ENCODE measurements at regions of chr12 and their contacts with region 1.

Region 1: DNA sequence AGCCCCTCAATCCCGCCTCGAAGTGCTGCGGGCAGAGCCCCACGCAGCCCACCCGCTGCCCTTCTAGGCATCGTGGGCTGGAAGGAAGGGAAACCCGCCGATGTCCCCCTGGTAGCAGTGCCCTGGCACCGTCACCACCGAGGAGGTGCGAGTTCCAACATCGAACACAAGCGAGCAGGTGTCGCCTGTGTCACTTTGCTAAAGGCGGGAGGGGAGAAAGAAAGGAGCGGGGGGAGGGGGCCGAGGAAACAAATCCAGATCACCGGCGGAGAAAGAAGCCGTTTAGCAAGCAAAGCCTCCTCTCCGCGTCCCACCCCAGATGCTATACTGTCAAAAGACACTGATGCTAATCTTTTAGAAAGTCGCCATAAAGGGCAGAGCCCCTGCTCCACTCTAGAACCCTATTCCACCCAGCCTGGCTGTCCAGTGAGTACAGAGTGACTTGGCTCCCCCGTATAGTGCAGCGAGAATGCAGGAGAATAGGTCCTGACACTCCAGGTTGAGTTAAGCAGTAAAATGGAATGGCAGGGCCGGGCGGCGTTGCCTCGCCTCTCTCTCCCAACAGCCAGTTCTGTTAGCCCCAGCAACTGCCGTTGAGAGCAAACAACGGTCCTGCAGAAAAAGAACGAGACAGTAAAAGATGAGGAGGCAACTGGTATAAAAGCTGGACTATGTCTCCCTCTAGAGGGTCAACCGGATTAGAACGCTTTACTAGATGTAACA is 67.9 kb upstream of the USP15 start:
- DNase-seq: peak in 11 of 14 experiments; percentile 18 to 82 (median 42)
- ATAC-seq: peak; percentile 93
- H3K4me3 ChIP-seq: peak overlapping the region; percentile 52
- H3K4me3 Mint-ChIP-seq: peak overlapping the region; percentile 82
- H3K27ac ChIP-seq: no peak overlapping the region
- H3K27ac Mint-ChIP-seq: no peak overlapping the region
- H3K4me1 ChIP-seq: peaks cover 22% of the 10 kb centered on the region
- H3K4me1 Mint-ChIP-seq: peaks cover 24% of the 10 kb centered on the region
- H3K27me3 ChIP-seq: peaks cover 21 to 42% of the 10 kb centered on the region in 2 experiments
- H3K27me3 Mint-ChIP-seq: peaks cover 51% of the 10 kb centered on the region
- CTCF ChIP-seq: peak; percentile 68

Region 2: GRCh38 chr12:62006076-62006732 is 186.1 kb before region 1 on chr12:
- CTCF ChIA-PET with region 1: no interaction called
- POLR2A ChIA-PET with region 1: no interaction called
- intact Hi-C with region 1: loop called in 1 of 2 experiments (anchors 5 kb)
- DNase-seq: peak in 5 of 14 experiments; percentile 8 to 53 (median 28)
- ATAC-seq: no peak
- H3K4me3 ChIP-seq: no peak overlapping the region
- H3K4me3 Mint-ChIP-seq: no peak overlapping the region
- H3K27ac ChIP-seq: no peak overlapping the region
- H3K27ac Mint-ChIP-seq: no peak overlapping the region
- H3K4me1 ChIP-seq: no peaks in the 10 kb centered on the region
- H3K4me1 Mint-ChIP-seq: no peaks in the 10 kb centered on the region
- H3K27me3 ChIP-seq: no peaks in the 10 kb centered on the region
- H3K27me3 Mint-ChIP-seq: peaks cover 3% of the 10 kb centered on the region
- CTCF ChIP-seq: peak; percentile 75

Region 3: GRCh38 chr12:62128175-62128975 is 64.0 kb before region 1 on chr12:
- CTCF ChIA-PET with region 1: interaction called, 3 read pairs
- POLR2A ChIA-PET with region 1: no interaction called
- intact Hi-C with region 1: loop called in 1 of 2 experiments (anchors 5 kb)
- DNase-seq: no peak
- ATAC-seq: no peak
- H3K4me3 ChIP-seq: no peak overlapping the region
- H3K4me3 Mint-ChIP-seq: no peak overlapping the region
- H3K27ac ChIP-seq: no peak overlapping the region
- H3K27ac Mint-ChIP-seq: no peak overlapping the region
- H3K4me1 ChIP-seq: no peaks in the 10 kb centered on the region
- H3K4me1 Mint-ChIP-seq: no peaks in the 10 kb centered on the region
- H3K27me3 ChIP-seq: no peaks in the 10 kb centered on the region
- H3K27me3 Mint-ChIP-seq: peaks cover 6% of the 10 kb centered on the region
- CTCF ChIP-seq: no peak

Measured in CD4-positive, alpha-beta T cell (primary cell).